Calu3 (cell line): ENCODE measurements at regions of chr1 and their contacts with region 1.

Region 1: DNA sequence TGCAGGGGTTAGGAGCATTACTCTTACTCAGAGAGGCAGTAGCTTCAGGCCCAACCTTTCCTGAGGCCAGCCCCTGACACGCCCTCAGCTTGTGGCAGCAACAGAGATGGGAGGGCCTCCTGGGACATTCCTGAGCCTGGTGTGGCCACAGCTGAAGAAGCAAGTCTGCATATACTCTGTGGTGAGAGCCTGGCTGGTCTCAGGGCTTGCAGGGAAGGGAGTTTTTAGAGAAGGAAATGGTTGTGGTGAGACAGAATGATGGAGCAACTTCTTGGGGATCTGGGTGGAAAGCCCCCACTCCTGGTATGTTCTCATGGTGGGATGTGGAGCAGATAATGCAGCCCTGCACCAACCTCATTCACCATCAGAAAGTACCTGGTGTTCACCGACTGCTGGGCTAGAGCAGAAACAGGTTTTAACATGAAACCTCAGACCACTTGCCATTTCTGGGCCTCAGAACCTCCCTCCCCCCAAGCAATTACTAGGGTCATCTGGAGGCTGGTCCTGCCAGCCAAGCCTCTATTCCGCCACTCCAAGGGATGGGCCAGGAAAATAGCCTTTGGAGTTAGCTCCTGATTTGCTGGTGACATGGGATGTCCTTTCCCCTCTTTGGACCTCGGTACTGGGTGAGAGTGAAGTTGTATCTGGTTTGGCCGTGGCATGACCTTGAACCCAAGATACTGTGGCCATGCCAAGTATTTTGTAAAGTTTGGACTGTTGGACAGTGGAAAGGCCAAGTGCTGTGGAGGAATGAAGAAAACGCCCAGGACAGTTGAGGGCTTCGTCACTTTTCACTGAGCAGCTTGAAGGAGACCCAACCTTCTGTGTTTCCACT is 28.1 kb upstream of the RNF19B start:
- DNase-seq: peak; percentile 90
- H3K4me3 Mint-ChIP-seq: no peak overlapping the region
- H3K27ac Mint-ChIP-seq: peak overlapping the region; percentile 74
- H3K4me1 Mint-ChIP-seq: peaks cover 44% of the 10 kb centered on the region
- H3K27me3 Mint-ChIP-seq: no peaks in the 10 kb centered on the region
- CTCF ChIP-seq: no peak

Region 2: GRCh38 chr1:32817159-32817814 is 175.4 kb before region 1 on chr1 and contains the starts of genes S100PBP and YARS1:
- CTCF ChIA-PET with region 1: no interaction called
- intact Hi-C with region 1: no loop called
- DNase-seq: peak; percentile 100
- H3K4me3 Mint-ChIP-seq: peak within 1 kb of the TSS; percentile 93
- H3K27ac Mint-ChIP-seq: peak within 1 kb of the TSS; percentile 89
- H3K4me1 Mint-ChIP-seq: peaks cover 37% of the 10 kb centered on the region
- H3K27me3 Mint-ChIP-seq: no peaks in the 10 kb centered on the region
- CTCF ChIP-seq: no peak
- total RNA-seq, gene S100PBP: 57.4 and 61.1 TPM in 2 replicates
- total RNA-seq, gene YARS1: 186 and 188 TPM in 2 replicates

Region 3: GRCh38 chr1:32981003-32981901 is 11.5 kb before region 1 on chr1:
- CTCF ChIA-PET with region 1: interaction called, 12 read pairs
- intact Hi-C with region 1: no loop called
- DNase-seq: peak; percentile 79
- H3K4me3 Mint-ChIP-seq: peak overlapping the region; percentile 38
- H3K27ac Mint-ChIP-seq: peak overlapping the region; percentile 94
- H3K4me1 Mint-ChIP-seq: peaks cover 23% of the 10 kb centered on the region
- H3K27me3 Mint-ChIP-seq: no peaks in the 10 kb centered on the region
- CTCF ChIP-seq: no peak